ACHN (cell line): ENCODE measurements at regions of chr12 and their contacts with region 1.

Region 1: DNA sequence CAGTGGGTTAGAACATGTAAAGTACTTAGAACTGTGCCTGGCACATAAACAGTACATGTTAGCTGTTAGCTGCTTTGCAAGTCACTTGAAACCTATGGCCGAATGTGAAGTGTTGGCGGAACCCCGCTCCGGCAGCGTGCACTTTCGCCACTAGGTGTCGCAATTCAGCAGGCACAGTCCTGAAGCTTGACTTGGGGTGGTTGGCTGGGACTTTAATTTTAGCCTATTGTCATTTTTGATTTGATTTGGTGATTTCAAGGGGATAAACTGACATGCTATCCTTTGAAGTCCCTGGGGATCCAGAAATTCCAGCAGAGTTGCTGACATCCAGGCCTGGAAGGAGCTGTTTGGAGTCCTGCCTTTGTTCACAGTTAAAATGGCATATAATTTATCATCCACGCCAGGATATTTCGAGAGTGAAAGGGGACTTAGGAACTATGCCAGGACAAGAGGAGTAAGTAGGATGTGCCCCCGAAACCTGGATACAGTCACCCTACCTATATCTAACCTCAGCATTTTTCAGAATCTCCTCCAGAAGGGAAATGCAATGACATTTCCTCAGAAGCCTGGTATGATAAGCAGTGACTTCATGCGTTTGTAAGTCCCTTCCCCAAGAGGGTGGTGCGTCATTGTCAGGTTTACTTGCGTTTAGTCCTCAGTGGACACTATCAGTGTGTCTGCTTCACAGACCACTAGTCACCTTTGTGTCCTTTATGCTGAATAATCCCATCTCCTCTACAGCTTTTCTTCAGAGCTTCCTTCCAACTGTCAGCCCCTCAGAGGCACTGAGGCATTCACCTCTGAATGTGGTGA is 3.5 kb upstream of the TSPAN9 start:
- DNase-seq: peak; percentile 85

Region 2: GRCh38 chr12:3275171-3276041 is 201.8 kb after region 1 on chr12:
- in situ Hi-C with region 1: loop called (anchors 10 kb)
- DNase-seq: peak; percentile 80